PC-3 (cell line): ENCODE measurements at regions of chr1 and their contacts with region 1.

Region 1: DNA sequence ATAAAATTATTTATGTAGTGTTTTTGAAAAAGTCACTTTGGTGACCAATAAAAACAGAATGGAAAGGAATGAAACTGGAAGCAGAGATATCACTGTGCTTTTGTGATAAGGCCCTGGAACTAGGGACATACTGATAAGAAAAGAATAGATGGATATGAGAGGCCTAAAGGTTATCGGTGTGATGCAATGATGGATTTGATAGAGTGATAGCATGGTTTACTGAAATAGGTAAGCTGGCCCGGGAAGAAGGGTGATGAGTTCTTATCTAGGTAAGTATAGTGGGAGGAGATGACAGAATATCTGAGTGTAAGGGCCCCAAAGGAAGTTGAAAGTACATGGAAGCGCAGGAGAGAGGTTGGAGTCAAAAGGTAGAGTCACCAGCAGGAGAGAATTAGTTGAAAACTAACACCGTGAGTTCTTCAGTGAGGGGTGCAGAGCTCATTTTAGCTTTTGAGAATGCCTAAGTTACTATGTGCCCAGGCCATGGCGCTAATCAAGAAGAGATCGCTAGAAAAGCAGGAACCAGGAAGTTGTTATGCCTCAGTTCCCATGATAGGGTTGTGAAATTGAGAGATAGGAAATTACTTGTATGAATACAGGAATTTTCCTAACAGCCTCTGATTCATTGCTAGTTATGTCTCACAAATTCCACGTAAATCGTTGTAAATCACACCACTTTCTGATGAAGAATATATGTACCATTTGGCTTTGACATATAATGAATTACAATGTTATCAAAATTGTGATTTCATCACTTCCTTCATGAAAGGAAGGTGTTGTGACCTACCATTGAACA is 115.3 kb downstream of the PLA2G4A start:
- DNase-seq: no peak
- ATAC-seq: no peak
- H3K4me3 ChIP-seq: no peak overlapping the region
- H3K27ac ChIP-seq: no peak overlapping the region
- H3K4me1 ChIP-seq: no peaks in the 10 kb centered on the region
- H3K27me3 ChIP-seq: no peaks in the 10 kb centered on the region
- CTCF ChIP-seq: no peak

Region 2: GRCh38 chr1:186763107-186763506 is 181.0 kb before region 1 on chr1:
- CTCF ChIA-PET with region 1: no interaction called
- POLR2A ChIA-PET with region 1: no interaction called
- intact Hi-C with region 1: no loop called
- DNase-seq: peak; percentile 74
- ATAC-seq: peak; percentile 80
- H3K4me3 ChIP-seq: no peak overlapping the region
- H3K27ac ChIP-seq: peak overlapping the region; percentile 90
- H3K4me1 ChIP-seq: peaks cover 15% of the 10 kb centered on the region
- H3K27me3 ChIP-seq: no peaks in the 10 kb centered on the region
- CTCF ChIP-seq: no peak

Region 3: DNA sequence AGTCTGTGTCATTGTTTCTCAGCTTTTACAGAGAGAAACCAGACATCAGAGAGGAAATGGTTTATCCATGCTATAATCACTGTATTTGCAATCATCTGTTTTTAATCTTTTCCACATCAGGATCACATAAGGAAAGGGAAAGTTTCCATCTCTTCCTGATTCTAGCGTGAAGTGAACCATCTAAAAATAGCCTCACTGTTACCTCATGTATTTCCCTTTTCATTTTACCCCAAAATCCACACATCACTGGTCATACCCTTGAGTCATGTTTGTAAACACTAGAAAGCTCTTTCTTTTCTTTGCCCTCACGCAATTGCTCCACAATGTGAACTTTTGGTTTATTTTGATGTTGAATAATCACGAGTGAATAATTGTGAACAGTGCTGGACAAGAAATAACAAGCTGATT is 30.7 kb after region 1 on chr1:
- CTCF ChIA-PET with region 1: no interaction called
- POLR2A ChIA-PET with region 1: no interaction called
- intact Hi-C with region 1: loop called (anchors 5 kb)
- DNase-seq: peak; percentile 75
- ATAC-seq: peak; percentile 95
- H3K4me3 ChIP-seq: peak overlapping the region; percentile 29; the same call in 1 of the 2 replicates
- H3K27ac ChIP-seq: peak overlapping the region; percentile 96
- H3K4me1 ChIP-seq: peaks cover 23% of the 10 kb centered on the region
- H3K27me3 ChIP-seq: no peaks in the 10 kb centered on the region
- CTCF ChIP-seq: no peak